K562 (cell line): ENCODE measurements at regions of chr17 and their contacts with region 1.

Region 1: DNA sequence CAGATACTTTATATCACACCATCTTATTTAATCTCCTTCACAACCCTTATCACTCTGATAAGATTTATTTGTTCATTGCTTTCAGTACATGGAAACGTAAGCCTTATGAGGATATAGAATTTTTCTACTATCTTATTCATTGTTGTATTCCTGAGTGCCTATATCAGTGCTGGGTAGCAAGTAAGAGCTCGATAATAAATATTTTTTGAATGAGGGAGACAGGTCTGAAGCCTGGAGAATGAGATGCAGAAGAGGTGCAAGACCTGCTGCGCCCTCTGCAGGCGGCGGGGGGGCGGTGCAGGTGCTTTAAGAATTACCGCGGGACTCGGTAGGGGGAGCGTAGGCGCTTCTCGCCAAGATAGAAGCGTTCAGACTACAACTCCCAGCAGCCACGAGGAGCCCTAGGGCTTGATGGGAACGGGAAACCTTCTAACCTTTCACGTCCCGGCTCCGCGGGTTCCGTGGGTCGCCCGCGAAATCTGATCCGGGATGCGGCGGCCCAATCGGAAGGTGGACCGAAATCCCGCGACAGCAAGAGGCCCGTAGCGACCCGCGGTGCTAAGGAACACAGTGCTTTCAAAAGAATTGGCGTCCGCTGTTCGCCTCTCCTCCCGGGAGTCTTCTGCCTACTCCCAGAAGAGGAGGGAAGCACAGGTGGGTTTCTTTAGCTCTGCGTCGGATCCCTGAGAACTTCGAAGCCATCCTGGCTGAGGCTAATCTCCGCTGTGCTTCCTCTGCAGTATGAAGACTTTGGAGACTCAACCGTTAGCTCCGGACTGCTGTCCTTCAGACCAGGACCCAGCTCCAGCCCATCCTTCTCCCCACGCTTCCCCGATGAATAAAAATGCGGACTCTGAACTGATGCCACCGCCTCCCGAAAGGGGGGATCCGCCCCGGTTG is at the start of gene WRAP53:
- DNase-seq: peak; percentile 80 to 97 (median 86)
- ATAC-seq: peak; percentile 89
- H3K4me3 ChIP-seq: peak within 1 kb of the TSS; percentile 78
- H3K27ac ChIP-seq: peak within 1 kb of the TSS; percentile 99
- H3K4me1 ChIP-seq: peaks cover 6 to 21% of the 10 kb centered on the region in 2 experiments; a peak in 3 of 5 replicates
- H3K27me3 ChIP-seq: no peaks in the 10 kb centered on the region
- CTCF ChIP-seq: peak; percentile 96 to 99 (median 99)
- EP300 ChIP-seq: no peak
- POLR2A ChIP-seq: peak; percentile 76
- RAD21 ChIP-seq: peak; percentile 75 to 84
- polyA plus RNA-seq, gene WRAP53: 0.72 to 4.1 TPM

Region 2: DNA sequence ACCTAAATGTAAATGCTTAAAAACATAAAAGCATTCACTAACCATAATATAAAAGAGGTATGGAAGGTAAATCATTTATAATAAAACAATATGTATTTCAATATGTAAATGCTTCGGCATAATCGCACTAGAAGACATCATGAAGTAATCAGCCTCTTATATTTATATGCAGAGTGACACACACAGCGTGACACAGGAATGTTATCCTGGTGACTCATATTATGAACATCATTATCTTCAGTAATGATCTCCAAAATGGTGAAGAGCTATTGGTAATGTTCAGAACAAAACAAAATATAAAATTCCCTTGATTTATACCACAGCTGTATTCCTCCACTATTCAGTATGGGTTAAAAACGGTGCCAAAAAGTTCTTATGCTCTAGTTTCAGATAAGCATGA is 1307.1 kb before region 1 on chr17:
- CTCF ChIA-PET with region 1: no interaction called
- POLR2A ChIA-PET with region 1: no interaction called
- in situ Hi-C with region 1: no loop called
- intact Hi-C with region 1: no loop called
- DNase-seq: no peak
- ATAC-seq: no peak
- H3K4me3 ChIP-seq: no peak overlapping the region
- H3K27ac ChIP-seq: no peak overlapping the region
- H3K4me1 ChIP-seq: no peaks in the 10 kb centered on the region
- H3K27me3 ChIP-seq: no peaks in the 10 kb centered on the region; a peak in 1 of 5 replicates
- CTCF ChIP-seq: no peak
- EP300 ChIP-seq: no peak
- POLR2A ChIP-seq: no peak
- RAD21 ChIP-seq: no peak

Region 3: GRCh38 chr17:7589204-7589868 is 98.8 kb before region 1 on chr17:
- CTCF ChIA-PET with region 1: interaction called, 3 read pairs
- POLR2A ChIA-PET with region 1: interaction called, 35 read pairs
- in situ Hi-C with region 1: no loop called
- intact Hi-C with region 1: loop called (anchors 5 kb)
- DNase-seq: no peak
- ATAC-seq: no peak
- H3K4me3 ChIP-seq: no peak overlapping the region
- H3K27ac ChIP-seq: no peak overlapping the region
- H3K4me1 ChIP-seq: peaks cover 28 to 50% of the 10 kb centered on the region in 2 experiments
- H3K27me3 ChIP-seq: no peaks in the 10 kb centered on the region
- CTCF ChIP-seq: no peak
- EP300 ChIP-seq: no peak
- POLR2A ChIP-seq: no peak
- RAD21 ChIP-seq: no peak

Region 4: DNA sequence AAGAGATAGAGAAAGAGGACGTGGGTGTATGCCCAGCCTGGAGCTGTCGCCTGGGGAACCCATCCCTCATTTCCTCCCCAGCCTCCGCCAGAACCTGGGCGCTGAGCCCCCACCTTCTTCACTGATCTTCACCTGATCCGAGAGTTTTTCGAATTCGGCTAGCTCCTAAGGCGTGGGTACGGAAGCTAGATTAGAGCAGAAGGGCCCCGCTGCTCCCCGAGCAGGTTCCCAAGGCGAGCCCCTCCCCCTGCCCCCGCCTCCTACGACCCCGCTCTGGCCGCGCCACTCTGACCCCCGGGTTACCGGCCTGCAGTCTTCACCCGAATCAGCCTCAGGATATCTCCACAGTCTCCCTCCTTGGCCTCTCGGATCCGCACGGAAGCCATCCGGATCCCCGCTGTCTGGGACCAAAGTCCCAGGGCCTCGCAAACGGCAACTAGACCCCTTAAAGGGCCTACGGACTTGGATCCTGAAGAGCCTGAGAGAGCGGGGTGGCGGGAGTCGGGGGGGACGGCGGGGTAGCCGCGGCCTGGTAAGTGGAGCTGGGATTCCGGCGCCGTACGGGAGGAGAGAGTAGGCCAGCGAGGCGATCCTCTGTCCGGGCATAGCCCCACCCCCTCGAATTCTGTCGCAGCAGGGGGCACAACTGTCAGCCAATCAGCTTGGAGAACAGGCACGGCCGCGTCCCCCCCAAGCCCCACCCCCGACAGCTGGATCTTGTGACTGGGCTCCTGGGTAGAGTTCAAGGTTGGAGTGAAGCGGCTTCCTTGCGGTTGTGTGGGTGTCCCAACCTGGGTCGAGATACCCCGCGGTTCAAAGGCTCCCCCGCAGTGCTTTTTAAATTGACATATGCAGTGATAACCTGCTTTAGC is 60.7 kb before region 1 on chr17 and contains the start of gene SAT2:
- CTCF ChIA-PET with region 1: interaction called, 3 read pairs
- POLR2A ChIA-PET with region 1: interaction called, 38 read pairs
- in situ Hi-C with region 1: loop called (anchors 5 kb)
- intact Hi-C with region 1: no loop called
- DNase-seq: peak; percentile 95 to 98 (median 98)
- ATAC-seq: peak; percentile 93
- H3K4me3 ChIP-seq: peak within 1 kb of the TSS; percentile 51
- H3K27ac ChIP-seq: peak within 1 kb of the TSS; percentile 31; the same call in 2 of the 3 replicates
- H3K4me1 ChIP-seq: peaks cover 0 to 17% of the 10 kb centered on the region in 2 experiments; a peak in 4 of 5 replicates
- H3K27me3 ChIP-seq: no peaks in the 10 kb centered on the region
- CTCF ChIP-seq: no peak
- EP300 ChIP-seq: peak; percentile 42; the same call in 1 of the 2 replicates
- POLR2A ChIP-seq: peak; percentile 42; the same call in 1 of the 2 replicates
- RAD21 ChIP-seq: no peak
- polyA plus RNA-seq, gene SAT2: 2.0 to 3.6 TPM

Region 5: GRCh38 chr17:7640783-7641182 is 47.4 kb before region 1 on chr17:
- CTCF ChIA-PET with region 1: no interaction called
- POLR2A ChIA-PET with region 1: interaction called, 21 read pairs
- in situ Hi-C with region 1: no loop called
- intact Hi-C with region 1: no loop called
- DNase-seq: no peak
- ATAC-seq: no peak
- H3K4me3 ChIP-seq: no peak overlapping the region
- H3K27ac ChIP-seq: no peak overlapping the region
- H3K4me1 ChIP-seq: peaks cover 0 to 6% of the 10 kb centered on the region in 2 experiments; a peak in 2 of 5 replicates
- H3K27me3 ChIP-seq: no peaks in the 10 kb centered on the region
- CTCF ChIP-seq: no peak
- EP300 ChIP-seq: no peak
- POLR2A ChIP-seq: no peak
- RAD21 ChIP-seq: no peak

Region 6: DNA sequence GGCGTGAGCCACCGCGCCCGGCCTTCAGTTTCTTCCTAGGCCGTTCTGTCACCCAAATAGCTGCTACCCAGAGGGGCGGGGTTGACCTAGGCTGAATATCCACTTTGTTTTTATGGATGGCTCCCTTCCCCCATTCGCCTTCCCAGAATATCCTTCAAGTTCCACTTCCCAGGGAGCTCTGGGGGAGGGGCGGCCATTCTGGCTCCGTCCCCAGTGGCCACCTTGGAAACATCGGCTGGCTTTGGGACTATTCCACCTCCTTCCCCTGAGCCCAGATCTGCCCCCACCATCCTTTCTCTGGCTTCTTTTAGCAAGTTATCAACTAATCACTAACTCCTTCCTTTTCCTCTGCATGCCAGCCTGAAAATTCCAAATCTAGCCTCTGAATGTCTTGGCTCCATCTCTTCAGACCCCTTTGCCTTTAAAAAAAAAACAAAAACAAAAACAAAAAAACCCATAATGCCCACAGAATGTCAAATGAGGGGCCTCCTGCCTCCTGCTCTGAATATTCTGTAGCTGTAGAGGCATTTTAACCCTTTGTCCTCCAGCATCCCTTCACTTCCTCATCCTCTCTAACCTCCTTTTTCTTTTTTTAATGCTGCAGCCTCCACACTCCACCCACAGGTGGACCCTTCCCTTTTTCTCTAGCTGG is 31.1 kb before region 1 on chr17:
- CTCF ChIA-PET with region 1: no interaction called
- POLR2A ChIA-PET with region 1: interaction called, 41 read pairs
- in situ Hi-C with region 1: no loop called
- intact Hi-C with region 1: no loop called
- DNase-seq: peak in 1 of 4 experiments; percentile 3
- ATAC-seq: no peak
- H3K4me3 ChIP-seq: no peak overlapping the region
- H3K27ac ChIP-seq: no peak overlapping the region
- H3K4me1 ChIP-seq: peaks cover 0 to 8% of the 10 kb centered on the region in 2 experiments; a peak in 3 of 5 replicates
- H3K27me3 ChIP-seq: no peaks in the 10 kb centered on the region
- CTCF ChIP-seq: no peak
- EP300 ChIP-seq: no peak
- POLR2A ChIP-seq: no peak
- RAD21 ChIP-seq: no peak

Region 7: DNA sequence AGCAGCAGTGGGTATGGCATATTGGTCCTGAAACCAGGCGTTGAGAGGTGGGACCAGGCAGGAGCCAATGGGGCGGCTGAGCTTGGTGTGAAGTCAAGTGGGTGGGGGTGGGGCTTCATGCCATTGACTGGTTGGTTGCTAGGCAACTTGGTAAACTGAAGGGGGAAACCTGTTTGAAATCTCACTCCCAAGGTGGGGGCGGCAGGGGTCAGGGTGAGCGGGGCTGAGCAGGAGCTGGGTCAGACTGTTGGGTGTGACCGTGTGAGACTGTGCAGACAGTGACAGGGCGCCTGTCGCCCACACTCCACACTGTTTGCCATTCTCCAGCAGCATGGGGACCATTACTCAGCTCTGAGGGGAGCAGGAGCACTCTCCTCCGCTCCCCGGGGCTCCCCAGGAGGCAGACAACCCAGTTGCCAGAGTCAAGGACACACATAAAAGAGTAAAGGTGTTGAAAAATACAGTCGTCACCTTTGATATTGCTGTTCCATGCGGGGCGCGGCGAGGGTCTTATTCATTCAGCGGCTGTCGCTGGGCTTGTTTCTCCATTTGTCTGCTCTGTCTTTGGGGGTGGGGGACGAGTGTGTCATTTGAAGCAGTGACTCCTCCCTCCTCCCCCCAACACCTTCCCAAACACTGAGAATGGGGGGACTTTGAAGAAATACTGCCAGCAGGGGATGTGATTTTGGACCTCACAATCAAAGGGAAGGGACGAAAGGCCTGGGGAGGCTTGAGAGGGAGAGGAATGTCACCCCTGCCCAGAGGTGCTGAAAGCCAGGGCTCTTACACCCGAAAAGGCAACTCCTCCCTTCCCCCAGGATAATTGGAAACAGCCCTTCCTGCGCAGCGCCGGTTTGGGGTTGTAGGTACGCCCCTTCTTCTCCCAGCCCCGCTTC is 15.7 kb after region 1 on chr17:
- CTCF ChIA-PET with region 1: no interaction called
- POLR2A ChIA-PET with region 1: interaction called, 67 read pairs
- in situ Hi-C with region 1: no loop called
- intact Hi-C with region 1: no loop called
- DNase-seq: peak; percentile 34 to 58 (median 42)
- ATAC-seq: peak; percentile 63
- H3K4me3 ChIP-seq: no peak overlapping the region
- H3K27ac ChIP-seq: no peak overlapping the region
- H3K4me1 ChIP-seq: peaks cover 5 to 23% of the 10 kb centered on the region in 2 experiments; a peak in 3 of 5 replicates
- H3K27me3 ChIP-seq: peaks cover 7 to 27% of the 10 kb centered on the region in 2 experiments; a peak in 4 of 5 replicates
- CTCF ChIP-seq: no peak
- EP300 ChIP-seq: no peak
- POLR2A ChIP-seq: no peak
- RAD21 ChIP-seq: no peak